Heart right ventricle (tissue), 16 donors: ENCODE measurements at regions of chr1 and their contacts with region 1.

Region 1: GRCh38 chr1:182851825-182852224 is 12.7 kb downstream of the DHX9 start:
- DNase-seq: no peak
- ATAC-seq: no peak
- H3K4me3 ChIP-seq: no peak overlapping the region
- H3K27ac ChIP-seq: no peak overlapping the region
- H3K4me1 ChIP-seq: peaks cover 0 to 16% (median 0%) of the 10 kb centered on the region in 9 donors
- H3K27me3 ChIP-seq: no peaks in the 10 kb centered on the region
- CTCF ChIP-seq: no peak

Region 2: DNA sequence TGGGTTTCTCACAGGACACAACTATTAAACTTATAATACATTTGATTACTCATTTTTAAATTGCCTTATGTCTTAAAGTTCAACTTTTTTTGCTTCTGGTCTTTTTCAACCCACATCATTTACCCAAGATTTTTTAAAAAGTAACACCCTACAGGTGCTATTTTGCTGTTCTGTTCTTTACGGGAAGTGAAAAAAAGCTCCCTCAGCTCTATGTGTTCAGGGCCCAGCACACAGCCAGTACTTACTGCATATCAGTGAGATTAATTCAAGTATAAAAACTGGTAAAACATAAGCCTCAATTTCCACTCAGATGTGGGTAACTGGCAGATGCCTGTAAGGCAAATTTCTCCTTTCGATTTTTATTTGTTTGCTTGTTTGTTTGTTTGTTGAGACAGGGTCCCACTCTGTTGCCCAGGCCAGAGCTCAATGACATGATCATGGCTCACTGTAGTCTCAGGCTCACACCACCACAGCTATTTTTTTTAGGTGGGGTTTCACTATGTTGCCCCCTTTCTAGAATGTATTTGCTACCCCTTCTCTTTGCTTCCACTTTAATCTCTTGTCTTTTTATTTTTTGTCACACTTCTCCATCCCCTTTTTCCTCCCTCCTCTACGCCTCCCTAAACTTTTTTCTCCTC is 283.1 kb before region 1 on chr1:
- intact Hi-C with region 1: no loop called
- DNase-seq: no peak
- ATAC-seq: no peak
- H3K4me3 ChIP-seq: no peak overlapping the region
- H3K27ac ChIP-seq: no peak overlapping the region
- H3K4me1 ChIP-seq: no peaks in the 10 kb centered on the region
- H3K27me3 ChIP-seq: no peaks in the 10 kb centered on the region
- CTCF ChIP-seq: no peak

Region 3: DNA sequence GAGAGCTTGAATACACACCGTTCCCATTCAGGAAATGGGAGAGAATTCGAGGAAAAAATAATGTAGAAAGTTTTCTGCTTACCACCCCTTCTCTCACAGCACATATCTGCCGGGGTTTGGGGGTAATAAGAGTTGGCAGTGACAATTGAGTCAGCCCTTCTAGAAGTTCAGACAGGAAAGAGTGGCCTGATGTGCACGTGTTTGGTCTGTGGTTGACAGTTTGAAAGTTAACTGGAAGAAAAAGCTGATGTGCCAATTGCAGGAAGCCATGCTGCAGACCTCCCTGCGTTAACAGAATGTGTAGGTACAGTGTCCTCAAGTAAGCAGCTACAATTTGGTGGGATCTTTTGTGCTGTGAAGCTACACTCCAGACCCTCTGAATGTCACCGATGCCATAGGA is 38.2 kb after region 1 on chr1:
- intact Hi-C with region 1: loop called in 2 of 10 experiments (anchors 5 kb)
- DNase-seq: no peak
- ATAC-seq: no peak
- H3K4me3 ChIP-seq: no peak overlapping the region
- H3K27ac ChIP-seq: no peak overlapping the region
- H3K4me1 ChIP-seq: peaks cover 0 to 9% (median 0%) of the 10 kb centered on the region in 9 donors
- H3K27me3 ChIP-seq: no peaks in the 10 kb centered on the region
- CTCF ChIP-seq: no peak

Region 4: GRCh38 chr1:183101841-183102276 is 250.0 kb after region 1 on chr1:
- intact Hi-C with region 1: no loop called
- DNase-seq: no peak
- ATAC-seq: peak in 4 of 8 donors; percentile 14 to 62 (median 50)
- H3K4me3 ChIP-seq: no peak overlapping the region
- H3K27ac ChIP-seq: peak overlapping the region in 3 of 10 donors; percentile 30 to 49 (median 45)
- H3K4me1 ChIP-seq: peaks cover 0 to 97% (median 84%) of the 10 kb centered on the region in 9 donors
- H3K27me3 ChIP-seq: no peaks in the 10 kb centered on the region
- CTCF ChIP-seq: no peak